Psoas muscle (tissue), 8 donors: ENCODE measurements at regions of chr3 and their contacts with region 1.

Region 1: DNA sequence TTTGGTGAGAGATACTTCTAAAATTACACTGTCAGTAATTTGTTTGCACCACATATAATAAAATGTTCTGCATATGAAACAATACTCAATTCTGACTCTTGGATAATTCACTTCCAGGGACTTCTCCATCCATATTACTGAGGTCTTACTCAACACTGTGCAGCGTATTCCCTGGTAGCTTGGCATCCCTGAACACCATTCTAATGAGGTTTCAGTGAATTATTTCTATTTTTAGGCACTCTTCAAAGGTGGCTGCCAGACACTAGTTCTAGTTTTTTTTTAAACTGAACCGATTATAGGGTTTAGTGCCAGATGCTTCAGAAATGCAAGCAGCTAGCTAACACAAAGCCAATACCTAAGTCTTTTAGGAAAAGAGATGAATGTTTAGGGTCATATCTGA is 283.3 kb downstream of the FEZF2 start:
- DNase-seq: no peak
- ATAC-seq: peak; percentile 51 to 69 (median 60)
- H3K4me3 ChIP-seq: peak overlapping the region; percentile 33
- H3K27ac ChIP-seq: peak overlapping the region; percentile 68
- H3K4me1 ChIP-seq: peaks cover 25% of the 10 kb centered on the region
- H3K27me3 ChIP-seq: no peaks in the 10 kb centered on the region
- CTCF ChIP-seq: no peak

Region 2: DNA sequence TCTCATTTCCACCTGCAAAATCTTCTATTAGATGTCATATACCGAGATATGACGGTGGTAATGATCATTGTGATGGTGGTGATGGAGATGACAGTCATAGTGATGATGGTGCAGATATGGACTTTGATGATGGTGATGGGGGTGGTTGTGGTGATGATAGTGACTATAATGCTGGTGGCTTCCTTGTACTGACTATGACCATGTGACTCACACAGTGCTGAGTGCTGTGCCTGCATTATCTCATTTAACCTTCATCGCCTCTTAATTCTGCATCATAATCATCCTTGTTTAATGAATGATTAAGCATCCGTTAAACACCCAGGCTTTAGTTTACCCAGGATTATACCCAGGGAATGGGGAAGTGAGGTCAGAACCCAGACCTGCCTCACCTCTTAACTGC is 48.4 kb before region 1 on chr3:
- intact Hi-C with region 1: loop called in 1 of 2 experiments (anchors 5 kb)
- DNase-seq: no peak
- ATAC-seq: no peak
- H3K4me3 ChIP-seq: no peak overlapping the region
- H3K27ac ChIP-seq: no peak overlapping the region
- H3K4me1 ChIP-seq: peaks cover 23% of the 10 kb centered on the region
- H3K27me3 ChIP-seq: no peaks in the 10 kb centered on the region
- CTCF ChIP-seq: no peak

Region 3: DNA sequence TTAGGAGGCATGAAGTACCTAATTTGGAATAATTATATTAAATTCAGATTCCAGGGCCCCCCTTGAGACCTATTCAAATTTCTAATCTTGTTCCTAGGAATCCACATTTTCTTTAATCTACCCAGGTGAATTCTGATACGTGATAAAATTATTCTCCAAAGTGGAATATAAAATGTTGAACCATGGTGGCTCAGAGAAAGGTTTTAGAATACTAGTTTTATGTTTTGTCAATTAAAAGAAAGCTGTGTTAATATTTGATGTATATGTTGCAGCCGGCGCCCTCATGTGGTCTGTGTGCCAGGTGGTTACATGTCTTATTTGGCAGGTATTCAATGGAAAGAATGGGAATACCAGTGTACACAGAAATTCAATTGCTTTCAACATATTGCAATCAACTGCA is 38.6 kb before region 1 on chr3:
- intact Hi-C with region 1: loop called in 1 of 2 experiments (anchors 5 kb)
- DNase-seq: no peak
- ATAC-seq: no peak
- H3K4me3 ChIP-seq: no peak overlapping the region
- H3K27ac ChIP-seq: no peak overlapping the region
- H3K4me1 ChIP-seq: peaks cover 10% of the 10 kb centered on the region
- H3K27me3 ChIP-seq: no peaks in the 10 kb centered on the region
- CTCF ChIP-seq: no peak

Region 4: GRCh38 chr3:62149962-62150361 is 59.9 kb after region 1 on chr3:
- intact Hi-C with region 1: no loop called
- DNase-seq: peak; percentile 57 to 79
- ATAC-seq: peak; percentile 63 to 87 (median 84)
- H3K4me3 ChIP-seq: peak overlapping the region; percentile 44
- H3K27ac ChIP-seq: peak overlapping the region; percentile 69
- H3K4me1 ChIP-seq: peaks cover 37% of the 10 kb centered on the region
- H3K27me3 ChIP-seq: no peaks in the 10 kb centered on the region
- CTCF ChIP-seq: no peak